Naive thymus-derived CD4-positive, alpha-beta T cell (primary cell): ENCODE measurements at regions of chr7 and their contacts with region 1.

Region 1: DNA sequence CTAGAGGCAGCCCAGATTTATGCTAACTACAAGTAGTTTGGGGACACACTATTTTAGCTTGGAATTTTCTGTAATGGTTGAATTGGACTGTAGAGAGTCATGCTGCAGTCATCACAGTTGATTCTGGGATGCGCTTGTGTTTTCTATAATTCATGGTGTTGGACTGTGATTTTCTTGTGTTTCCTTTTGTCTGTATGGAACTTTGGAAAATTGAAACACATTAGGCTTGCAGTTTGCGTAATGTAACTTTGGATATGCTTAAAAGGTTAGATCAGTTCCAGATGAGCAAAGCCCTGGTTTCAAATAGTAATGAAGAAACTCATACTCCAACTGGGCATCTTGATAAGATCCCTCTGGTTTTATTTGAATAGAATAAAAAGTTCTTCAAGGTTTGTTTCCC is 502.2 kb downstream of the ARL4A start:
- DNase-seq: no peak
- ATAC-seq: no peak
- H3K4me3 ChIP-seq: no peak overlapping the region
- H3K4me3 Mint-ChIP-seq: no peak overlapping the region
- H3K27ac ChIP-seq: no peak overlapping the region
- H3K27ac Mint-ChIP-seq: no peak overlapping the region
- H3K4me1 ChIP-seq: no peaks in the 10 kb centered on the region
- H3K4me1 Mint-ChIP-seq: no peaks in the 10 kb centered on the region
- H3K27me3 ChIP-seq: no peaks in the 10 kb centered on the region
- H3K27me3 Mint-ChIP-seq: peaks cover 0 to 11% (median 5%) of the 10 kb centered on the region in 5 donors

Region 2: GRCh38 chr7:12993025-12993424 is 196.6 kb before region 1 on chr7:
- CTCF ChIA-PET with region 1: no interaction called
- POLR2A ChIA-PET with region 1: no interaction called
- intact Hi-C with region 1: loop called in 1 of 2 experiments (anchors 5 kb)
- DNase-seq: no peak
- ATAC-seq: no peak
- H3K4me3 ChIP-seq: no peak overlapping the region
- H3K4me3 Mint-ChIP-seq: no peak overlapping the region
- H3K27ac ChIP-seq: no peak overlapping the region
- H3K27ac Mint-ChIP-seq: no peak overlapping the region
- H3K4me1 ChIP-seq: no peaks in the 10 kb centered on the region
- H3K4me1 Mint-ChIP-seq: peaks cover 0 to 3% (median 0%) of the 10 kb centered on the region in 7 donors
- H3K27me3 ChIP-seq: no peaks in the 10 kb centered on the region
- H3K27me3 Mint-ChIP-seq: peaks cover 0 to 7% (median 0%) of the 10 kb centered on the region in 5 donors